ENCODE measurements at regions of chr10 and their contacts with region 1.

Region 1: GRCh38 chr10:73894245-73894971 is 16.5 kb upstream of the PLAU start:
- DNase-seq: no peak
- ATAC-seq: peak in 1 of 4 donors; percentile 14
- H3K4me3 ChIP-seq: no peak overlapping the region
- H3K27ac ChIP-seq: no peak overlapping the region
- H3K4me1 ChIP-seq: peaks cover 0 to 9% (median 4%) of the 10 kb centered on the region in 3 donors
- H3K27me3 ChIP-seq: no peaks in the 10 kb centered on the region
- CTCF ChIP-seq: no peak

Region 2: GRCh38 chr10:73772280-73773151 is 121.9 kb before region 1 on chr10:
- intact Hi-C with region 1: no loop called
- DNase-seq: peak; percentile 81 to 95 (median 88)
- ATAC-seq: peak; percentile 77 to 84 (median 80)
- H3K4me3 ChIP-seq: peak overlapping the region; percentile 44 to 91 (median 80)
- H3K27ac ChIP-seq: peak overlapping the region; percentile 87 to 99 (median 93)
- H3K4me1 ChIP-seq: peaks cover 0 to 21% (median 8%) of the 10 kb centered on the region in 3 donors
- H3K27me3 ChIP-seq: no peaks in the 10 kb centered on the region
- CTCF ChIP-seq: no peak

Region 3: DNA sequence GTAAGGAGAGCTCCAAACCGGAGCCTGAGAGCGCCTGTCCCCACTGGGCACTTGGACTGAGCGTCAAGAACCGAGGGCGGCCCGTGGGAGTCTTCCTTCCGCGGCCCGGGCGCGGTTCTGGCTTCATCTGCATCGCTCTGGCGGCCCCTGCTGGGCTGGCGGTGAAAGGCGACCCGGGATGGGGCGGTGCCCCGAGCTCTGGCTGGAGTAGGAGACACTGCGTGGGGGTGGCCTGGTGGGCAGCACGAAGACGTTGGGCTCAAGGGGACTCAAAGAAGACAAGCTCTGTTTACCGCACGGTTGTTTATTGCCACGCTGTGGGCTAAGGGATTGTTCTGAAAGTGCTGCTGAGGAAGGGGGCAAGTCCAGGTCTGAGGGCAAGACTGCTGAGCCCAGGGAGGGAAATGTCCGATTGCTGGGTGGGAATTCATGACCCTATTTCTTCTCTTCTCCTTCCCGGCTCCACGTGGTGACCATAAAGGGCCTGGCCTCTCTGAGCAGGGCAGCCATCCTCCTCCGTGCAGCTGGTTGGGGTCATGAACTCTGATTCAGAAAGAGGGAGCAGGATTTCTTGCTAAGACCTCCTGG is 46.3 kb after region 1 on chr10:
- intact Hi-C with region 1: loop called in 2 of 3 experiments (anchors 5 to 10 kb)
- DNase-seq: peak; percentile 64 to 93 (median 82)
- ATAC-seq: peak; percentile 94 to 99 (median 98)
- H3K4me3 ChIP-seq: peak overlapping the region in 2 of 4 donors; percentile 18 to 30
- H3K27ac ChIP-seq: no peak overlapping the region
- H3K4me1 ChIP-seq: no peaks in the 10 kb centered on the region
- H3K27me3 ChIP-seq: no peaks in the 10 kb centered on the region
- CTCF ChIP-seq: peak; percentile 72 to 95 (median 85)

Region 4: DNA sequence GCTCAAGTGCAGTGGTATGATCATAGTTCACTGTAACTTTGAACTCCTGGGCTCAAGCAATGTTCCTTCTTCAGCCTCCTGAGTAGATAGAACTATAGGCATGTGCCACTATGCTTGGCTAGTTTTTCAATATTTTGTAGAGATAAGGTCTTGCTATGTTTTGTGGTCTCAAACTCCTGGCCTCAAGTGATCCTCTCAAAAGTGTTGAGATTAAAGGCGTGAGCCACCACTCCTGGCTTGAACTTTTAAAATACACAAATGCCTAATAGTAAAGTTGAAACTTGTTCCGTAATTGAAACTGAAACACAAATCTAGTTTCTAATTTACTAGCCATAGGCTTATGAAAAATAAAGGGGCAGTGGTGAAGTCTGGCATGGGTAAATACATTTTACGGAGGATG is 190.5 kb after region 1 on chr10:
- intact Hi-C with region 1: no loop called
- DNase-seq: no peak
- ATAC-seq: no peak
- H3K4me3 ChIP-seq: no peak overlapping the region
- H3K27ac ChIP-seq: no peak overlapping the region
- H3K4me1 ChIP-seq: peaks cover 0 to 2% (median 0%) of the 10 kb centered on the region in 3 donors
- H3K27me3 ChIP-seq: no peaks in the 10 kb centered on the region
- CTCF ChIP-seq: no peak

Region 5: DNA sequence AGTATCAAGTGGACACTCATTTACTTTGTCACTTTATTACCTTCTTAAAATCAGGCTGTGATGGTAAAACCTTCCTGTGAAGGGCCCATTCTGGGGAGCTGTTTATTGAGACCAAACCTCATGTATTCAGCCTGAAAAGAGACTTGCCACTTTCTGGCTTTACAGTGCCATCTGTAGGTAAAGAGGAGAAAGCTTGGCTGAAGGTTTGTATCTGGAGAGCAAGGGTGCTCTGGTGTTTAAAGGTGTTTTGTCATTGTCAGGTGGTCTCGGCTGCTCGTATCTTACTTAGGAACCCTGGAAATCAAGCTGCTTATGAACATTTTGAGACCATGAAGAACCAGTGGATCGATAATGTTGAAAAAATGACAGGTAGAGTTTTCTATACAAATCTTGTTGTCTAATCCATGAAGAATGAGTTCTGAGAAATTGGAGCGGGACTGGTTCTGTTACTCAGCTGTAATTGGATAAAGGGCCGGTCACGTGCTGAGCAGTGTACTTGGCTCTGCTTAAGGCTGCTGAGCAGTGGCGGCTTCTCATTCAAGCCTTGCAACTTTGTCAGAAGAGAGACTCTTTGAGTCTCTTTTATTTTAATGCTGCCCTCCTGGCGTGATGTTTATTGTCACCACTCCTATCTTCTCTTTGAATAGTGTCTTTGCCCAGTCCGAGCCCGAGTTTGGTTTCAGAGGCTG is 209.3 kb after region 1 on chr10:
- intact Hi-C with region 1: no loop called
- DNase-seq: no peak
- ATAC-seq: no peak
- H3K4me3 ChIP-seq: no peak overlapping the region
- H3K27ac ChIP-seq: no peak overlapping the region
- H3K4me1 ChIP-seq: no peaks in the 10 kb centered on the region
- H3K27me3 ChIP-seq: no peaks in the 10 kb centered on the region
- CTCF ChIP-seq: no peak